Ascending aorta (tissue), 2 donors: ENCODE measurements at regions of chr16 and their contacts with region 1.

Region 1: GRCh38 chr16:86563489-86564345 is 2.9 kb upstream of the FOXC2 start:
- DNase-seq: peak; percentile 70 to 97
- H3K4me3 ChIP-seq: peak overlapping the region; percentile 76 to 79
- H3K27ac ChIP-seq: peak overlapping the region; percentile 91 to 98
- H3K4me1 ChIP-seq: peaks cover 0 to 4% of the 10 kb centered on the region in 2 donors
- H3K27me3 ChIP-seq: no peaks in the 10 kb centered on the region
- CTCF ChIP-seq: peak; percentile 100

Region 2: GRCh38 chr16:86490856-86491255 is 72.9 kb before region 1 on chr16:
- intact Hi-C with region 1: no loop called
- DNase-seq: no peak
- H3K4me3 ChIP-seq: no peak overlapping the region
- H3K27ac ChIP-seq: no peak overlapping the region
- H3K4me1 ChIP-seq: no peaks in the 10 kb centered on the region
- H3K27me3 ChIP-seq: peaks cover 5% of the 10 kb centered on the region
- CTCF ChIP-seq: no peak

Region 3: DNA sequence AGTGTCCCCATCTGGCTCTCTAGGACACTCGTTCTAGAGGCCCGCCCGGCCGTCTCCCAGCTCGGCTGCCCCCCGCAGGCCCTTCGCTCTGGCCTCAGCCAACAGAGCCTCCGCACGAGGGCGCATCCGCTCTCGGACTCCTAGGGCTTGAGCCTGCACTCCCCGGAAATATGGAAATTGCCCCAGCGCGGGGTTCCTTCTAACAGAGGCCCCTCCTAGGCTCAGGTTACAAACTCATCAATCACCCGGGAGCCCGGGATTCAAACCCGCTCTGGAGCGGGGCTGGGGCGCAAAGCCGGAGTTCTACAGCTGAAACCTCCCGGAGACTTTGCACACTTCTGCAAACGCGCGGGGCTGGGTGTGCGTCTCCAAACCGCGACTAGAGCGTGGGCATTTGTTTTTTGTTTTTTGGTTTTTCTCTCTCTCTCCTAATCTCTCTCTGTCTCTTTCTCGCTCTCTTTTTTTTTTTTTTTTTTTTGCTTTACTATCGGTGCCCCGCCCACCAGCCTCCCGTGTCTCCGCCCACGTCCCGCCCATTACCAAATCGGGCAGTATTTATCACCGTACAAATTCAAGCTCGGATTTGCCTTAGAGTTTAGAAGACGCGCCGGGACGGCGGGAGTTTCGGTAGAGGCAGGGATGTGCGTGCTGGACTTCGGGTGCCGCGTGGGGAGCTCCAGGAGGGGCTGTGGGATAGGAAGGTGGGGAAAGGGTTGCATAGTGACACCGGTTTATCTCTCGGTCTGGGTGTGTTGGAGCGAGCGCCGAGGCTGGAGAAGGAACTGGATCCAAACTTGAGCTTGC is 12.2 kb after region 1 on chr16:
- intact Hi-C with region 1: loop called (anchors 2 kb)
- DNase-seq: peak; percentile 75 to 96
- H3K4me3 ChIP-seq: peak overlapping the region; percentile 57 to 79
- H3K27ac ChIP-seq: peak overlapping the region; percentile 91 to 99
- H3K4me1 ChIP-seq: peaks cover 7 to 53% of the 10 kb centered on the region in 2 donors
- H3K27me3 ChIP-seq: no peaks in the 10 kb centered on the region
- CTCF ChIP-seq: peak; percentile 68 to 75 (median 70)

Region 4: DNA sequence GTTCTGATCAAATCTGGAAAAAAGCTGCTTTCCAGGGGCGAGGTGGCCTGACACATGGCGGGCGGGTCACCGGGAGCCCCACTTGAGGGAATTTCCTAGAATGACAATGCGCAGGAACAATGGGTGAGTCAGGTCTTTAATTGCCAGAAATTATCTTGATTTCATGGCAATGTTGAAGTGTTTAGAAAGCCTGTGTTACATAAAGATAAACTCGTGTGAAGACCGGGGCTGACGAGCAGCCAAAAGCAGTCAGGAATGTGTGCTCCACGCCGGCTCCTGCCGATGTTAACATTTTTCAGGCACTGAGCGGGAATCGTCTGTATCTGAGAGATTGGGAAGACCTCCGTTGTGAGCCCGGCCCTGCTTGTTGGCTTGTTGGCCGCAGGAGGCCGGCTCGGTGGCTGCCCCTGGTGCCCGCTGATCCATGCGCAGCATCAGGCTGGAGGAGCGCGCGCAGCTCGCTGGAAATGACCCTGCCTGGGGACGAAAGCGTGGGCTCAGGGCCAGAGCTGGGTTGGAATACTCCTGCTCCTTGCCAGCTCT is 367.8 kb after region 1 on chr16:
- intact Hi-C with region 1: loop called (anchors 2 kb)
- DNase-seq: peak in 1 of 2 donors; percentile 80
- H3K4me3 ChIP-seq: peak overlapping the region; percentile 0 to 27
- H3K27ac ChIP-seq: peak overlapping the region; percentile 52 to 59
- H3K4me1 ChIP-seq: peaks cover 0 to 28% of the 10 kb centered on the region in 2 donors
- H3K27me3 ChIP-seq: no peaks in the 10 kb centered on the region
- CTCF ChIP-seq: peak in 1 of 3 experiments; percentile 19

Region 5: DNA sequence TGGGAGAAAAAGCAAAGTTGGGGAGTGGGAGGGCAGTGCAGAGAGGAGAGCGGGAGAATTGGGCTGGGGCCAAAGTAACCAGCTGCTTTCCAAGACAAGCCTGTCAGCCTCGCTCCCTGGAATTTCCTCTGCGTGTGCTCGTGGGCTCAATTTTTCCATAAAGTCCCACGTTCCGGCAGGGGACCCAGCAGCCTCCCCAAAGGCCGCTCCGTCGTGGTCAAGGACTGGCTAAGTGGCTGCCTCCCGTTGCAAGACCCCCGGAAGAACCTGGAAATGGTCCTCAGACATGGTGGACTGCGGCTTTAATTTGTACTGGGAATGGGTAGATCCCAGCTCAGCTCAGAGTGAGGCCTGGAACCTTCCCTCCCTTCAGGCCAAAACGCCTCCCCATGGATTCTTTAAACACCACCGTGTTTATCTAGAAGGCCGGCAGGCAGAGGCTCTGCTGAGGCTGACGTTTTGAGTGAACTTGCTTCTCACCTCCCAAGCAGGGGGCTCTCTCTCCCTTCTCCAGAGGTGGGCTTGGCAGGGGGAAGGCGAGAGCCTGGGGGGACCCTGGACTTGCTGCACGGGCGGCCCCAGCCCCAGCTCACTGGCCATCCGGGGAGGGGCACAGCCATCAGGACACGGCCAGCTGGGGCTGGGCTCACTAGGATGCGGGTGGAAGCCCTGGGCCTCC is 563.5 kb after region 1 on chr16:
- intact Hi-C with region 1: loop called (anchors 2 kb)
- DNase-seq: peak in 1 of 2 donors; percentile 73
- H3K4me3 ChIP-seq: peak overlapping the region in 1 of 2 donors; percentile 39
- H3K27ac ChIP-seq: peak overlapping the region; percentile 90 to 92
- H3K4me1 ChIP-seq: peaks cover 17 to 23% of the 10 kb centered on the region in 2 donors
- H3K27me3 ChIP-seq: no peaks in the 10 kb centered on the region
- CTCF ChIP-seq: peak in 1 of 3 experiments; percentile 9

Region 6: DNA sequence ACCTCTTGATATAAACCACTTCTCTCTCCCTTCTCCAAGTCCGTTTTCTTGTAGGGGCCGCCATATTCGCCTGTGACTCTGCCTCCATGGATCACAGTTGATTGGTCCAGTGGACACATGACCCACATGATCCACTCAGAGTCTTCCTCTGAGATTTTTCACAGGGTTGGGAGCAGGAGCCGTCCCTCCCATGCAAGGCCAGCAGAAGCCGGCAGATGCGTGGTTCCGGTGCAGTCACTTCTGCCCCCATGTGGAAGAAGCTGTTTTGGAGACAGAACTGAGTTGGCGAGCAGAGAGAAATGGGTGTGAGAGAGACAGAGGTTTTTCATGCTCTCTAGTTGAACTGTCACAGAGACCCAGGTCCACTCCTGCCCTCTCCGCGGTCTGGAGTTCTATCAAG is 670.2 kb after region 1 on chr16:
- intact Hi-C with region 1: no loop called
- DNase-seq: no peak
- H3K4me3 ChIP-seq: no peak overlapping the region
- H3K27ac ChIP-seq: no peak overlapping the region
- H3K4me1 ChIP-seq: no peaks in the 10 kb centered on the region
- H3K27me3 ChIP-seq: no peaks in the 10 kb centered on the region
- CTCF ChIP-seq: peak in 1 of 3 experiments; percentile 13

Region 7: DNA sequence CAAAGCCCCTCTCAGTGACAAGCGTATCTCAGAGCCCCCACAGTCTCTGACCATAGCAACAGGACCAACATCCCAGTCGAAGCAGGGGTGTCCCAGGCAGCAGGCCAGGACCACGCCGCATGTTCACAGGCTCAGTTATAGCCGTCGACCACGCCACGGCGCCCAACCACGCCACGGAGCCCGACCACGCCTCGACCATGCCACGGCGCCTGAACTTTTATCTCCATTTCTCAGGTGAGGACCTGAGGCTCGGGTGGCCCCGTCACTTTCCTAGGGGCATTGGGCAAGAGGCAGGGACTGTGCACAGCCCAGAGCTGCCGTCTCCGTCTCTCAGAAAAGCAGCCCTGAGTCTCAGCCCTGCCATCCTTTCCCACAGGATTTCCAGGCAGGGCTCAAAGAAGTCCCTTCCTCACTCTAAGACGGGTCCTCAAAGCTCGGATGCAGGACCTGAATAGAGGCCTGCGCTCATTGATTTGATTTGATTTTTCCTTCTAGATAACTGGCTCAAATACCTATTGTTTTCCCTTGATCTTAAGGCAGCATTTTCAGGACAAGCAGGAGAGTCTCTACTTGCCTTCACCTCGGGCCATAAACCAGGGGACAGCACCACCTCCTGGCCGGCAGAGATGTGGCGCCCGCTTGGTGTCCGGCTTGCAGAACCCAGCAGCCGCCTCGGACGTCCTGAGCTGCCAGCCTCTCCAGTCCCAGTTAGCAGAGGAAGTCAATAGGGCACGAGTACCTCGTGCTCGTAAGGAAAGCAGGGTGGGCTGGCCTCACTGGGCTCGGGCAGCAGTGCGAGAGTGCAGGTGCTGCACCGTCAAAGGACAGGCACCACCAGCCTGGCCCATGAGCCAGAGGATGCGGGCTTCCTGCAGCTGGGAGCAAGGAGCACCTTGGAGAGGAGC is 714.7 kb after region 1 on chr16:
- intact Hi-C with region 1: loop called (anchors 1 kb)
- DNase-seq: peak in 1 of 2 donors; percentile 88
- H3K4me3 ChIP-seq: no peak overlapping the region
- H3K27ac ChIP-seq: no peak overlapping the region
- H3K4me1 ChIP-seq: no peaks in the 10 kb centered on the region
- H3K27me3 ChIP-seq: no peaks in the 10 kb centered on the region
- CTCF ChIP-seq: peak; percentile 86 to 92 (median 89)

Region 8: DNA sequence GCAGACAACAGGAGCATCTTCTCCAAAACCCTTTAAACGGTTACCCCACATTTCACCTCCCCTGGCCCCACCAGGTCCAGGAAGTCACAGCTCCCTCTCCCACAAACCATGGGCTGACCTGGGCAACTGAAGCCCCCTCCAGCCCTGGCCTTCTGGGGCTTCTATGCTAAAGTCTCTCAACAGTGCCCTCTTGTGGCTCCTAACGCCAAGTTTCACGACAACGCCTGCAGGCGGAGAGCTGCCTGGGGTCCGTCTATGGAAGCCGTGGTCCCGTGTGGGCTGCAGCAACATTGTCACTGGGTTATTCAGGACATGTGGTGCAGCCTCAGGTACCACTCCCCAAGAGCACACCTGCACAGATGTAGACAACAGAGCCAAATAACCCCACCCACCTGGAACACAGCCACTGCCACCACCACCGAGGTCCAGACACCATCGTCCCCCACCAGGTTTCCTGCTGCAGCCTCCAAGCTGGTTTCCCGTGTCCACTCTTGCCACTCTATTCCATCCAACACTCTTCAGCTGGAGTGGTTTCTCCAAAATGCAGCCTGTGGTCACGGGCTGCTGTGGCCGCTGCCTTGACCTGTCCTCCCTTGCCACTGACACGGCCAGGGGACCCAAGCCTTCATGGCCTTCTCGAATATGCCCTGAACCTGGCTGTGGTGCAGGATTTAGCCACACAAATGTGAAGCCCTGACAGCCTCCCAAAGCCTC is 734.4 kb after region 1 on chr16:
- intact Hi-C with region 1: loop called (anchors 5 kb)
- DNase-seq: no peak
- H3K4me3 ChIP-seq: no peak overlapping the region
- H3K27ac ChIP-seq: no peak overlapping the region
- H3K4me1 ChIP-seq: no peaks in the 10 kb centered on the region
- H3K27me3 ChIP-seq: no peaks in the 10 kb centered on the region
- CTCF ChIP-seq: peak; percentile 43 to 71 (median 49)